MCF 10A (cell line): ENCODE measurements at regions of chr18 and their contacts with region 1.

Region 1: DNA sequence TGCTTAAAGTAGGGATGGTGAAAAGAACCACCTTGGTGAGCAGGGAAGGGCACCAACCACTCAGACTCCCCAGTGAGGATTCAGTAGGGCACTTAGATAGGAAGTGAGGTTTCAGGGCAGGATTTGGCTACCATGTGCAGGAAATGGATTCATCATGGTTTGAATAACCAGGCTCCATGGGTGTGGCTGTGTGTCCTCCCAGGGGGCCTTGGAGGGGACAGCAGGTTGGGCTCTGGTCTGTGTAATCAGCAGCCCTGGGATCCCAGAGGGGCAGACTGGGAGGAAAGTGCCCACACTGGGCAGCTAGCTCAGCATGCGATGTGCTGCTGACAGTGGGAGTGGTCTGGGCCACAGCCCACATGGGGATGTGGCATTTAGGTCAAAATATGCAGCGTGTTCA is 224.6 kb downstream of the CELF4 start:
- DNase-seq: no peak
- H3K4me3 Mint-ChIP-seq: no peak overlapping the region
- H3K27ac Mint-ChIP-seq: no peak overlapping the region
- H3K4me1 Mint-ChIP-seq: peaks cover 7% of the 10 kb centered on the region
- H3K27me3 Mint-ChIP-seq: peaks cover 24% of the 10 kb centered on the region
- CTCF ChIP-seq: no peak

Region 2: GRCh38 chr18:36942264-36942663 is 398.8 kb before region 1 on chr18:
- CTCF ChIA-PET with region 1: interaction called, 12 read pairs
- POLR2A ChIA-PET with region 1: no interaction called
- intact Hi-C with region 1: loop called (anchors 10 kb)
- DNase-seq: peak; percentile 54
- H3K4me3 Mint-ChIP-seq: no peak overlapping the region
- H3K27ac Mint-ChIP-seq: no peak overlapping the region
- H3K4me1 Mint-ChIP-seq: no peaks in the 10 kb centered on the region
- H3K27me3 Mint-ChIP-seq: no peaks in the 10 kb centered on the region
- CTCF ChIP-seq: peak; percentile 83

Region 3: DNA sequence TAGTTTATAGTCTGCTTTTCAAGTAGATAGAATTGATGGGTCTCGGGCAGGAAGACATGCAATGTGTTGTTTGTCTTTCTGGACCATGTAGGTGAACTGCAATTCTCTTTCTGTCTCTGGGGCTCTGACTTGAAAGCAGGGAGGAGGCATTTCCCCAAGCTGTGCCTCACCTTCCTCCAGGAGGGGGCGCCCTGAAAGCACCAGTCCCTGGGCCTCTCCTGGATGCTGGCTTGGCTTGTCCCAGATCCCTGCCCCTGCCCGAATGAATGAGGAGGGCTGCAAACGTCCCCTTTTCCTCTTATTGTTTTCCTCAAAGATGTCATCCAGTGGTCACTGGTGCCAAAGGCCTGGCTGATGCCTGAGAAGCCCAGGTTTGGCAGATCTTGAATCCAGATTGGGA is 46.1 kb before region 1 on chr18:
- CTCF ChIA-PET with region 1: interaction called, 3 read pairs
- POLR2A ChIA-PET with region 1: no interaction called
- intact Hi-C with region 1: loop called (anchors 1 kb)
- DNase-seq: peak; percentile 65
- H3K4me3 Mint-ChIP-seq: no peak overlapping the region
- H3K27ac Mint-ChIP-seq: no peak overlapping the region
- H3K4me1 Mint-ChIP-seq: peaks cover 8% of the 10 kb centered on the region
- H3K27me3 Mint-ChIP-seq: no peaks in the 10 kb centered on the region
- CTCF ChIP-seq: peak; percentile 10

Region 4: GRCh38 chr18:37328946-37329719 is 11.9 kb before region 1 on chr18:
- CTCF ChIA-PET with region 1: interaction called, 28 read pairs
- POLR2A ChIA-PET with region 1: no interaction called
- intact Hi-C with region 1: no loop called
- DNase-seq: no peak
- H3K4me3 Mint-ChIP-seq: no peak overlapping the region
- H3K27ac Mint-ChIP-seq: no peak overlapping the region
- H3K4me1 Mint-ChIP-seq: no peaks in the 10 kb centered on the region
- H3K27me3 Mint-ChIP-seq: no peaks in the 10 kb centered on the region
- CTCF ChIP-seq: no peak

Region 5: DNA sequence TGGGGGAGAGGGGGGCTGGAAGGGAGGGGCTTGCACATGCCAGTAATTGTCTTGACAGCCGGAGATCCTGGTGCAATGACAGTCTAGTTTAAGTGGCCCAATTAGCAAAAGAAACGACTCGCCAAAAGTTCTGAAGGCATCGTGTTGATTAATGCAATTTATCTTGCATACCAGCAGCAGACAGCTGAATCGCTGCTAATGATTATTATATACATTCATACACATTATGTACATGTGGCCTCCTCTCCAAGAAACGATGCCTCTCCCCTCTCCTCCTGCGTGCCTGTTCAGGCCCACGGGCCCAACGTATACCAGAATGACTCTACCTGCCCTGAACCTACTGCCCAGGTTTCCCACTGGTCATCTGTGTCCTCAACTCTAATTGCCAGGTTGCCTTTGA is 10.1 kb after region 1 on chr18:
- CTCF ChIA-PET with region 1: interaction called, 42 read pairs
- POLR2A ChIA-PET with region 1: no interaction called
- intact Hi-C with region 1: no loop called
- DNase-seq: no peak
- H3K4me3 Mint-ChIP-seq: no peak overlapping the region
- H3K27ac Mint-ChIP-seq: no peak overlapping the region
- H3K4me1 Mint-ChIP-seq: no peaks in the 10 kb centered on the region
- H3K27me3 Mint-ChIP-seq: peaks cover 8% of the 10 kb centered on the region
- CTCF ChIP-seq: no peak

Region 6: DNA sequence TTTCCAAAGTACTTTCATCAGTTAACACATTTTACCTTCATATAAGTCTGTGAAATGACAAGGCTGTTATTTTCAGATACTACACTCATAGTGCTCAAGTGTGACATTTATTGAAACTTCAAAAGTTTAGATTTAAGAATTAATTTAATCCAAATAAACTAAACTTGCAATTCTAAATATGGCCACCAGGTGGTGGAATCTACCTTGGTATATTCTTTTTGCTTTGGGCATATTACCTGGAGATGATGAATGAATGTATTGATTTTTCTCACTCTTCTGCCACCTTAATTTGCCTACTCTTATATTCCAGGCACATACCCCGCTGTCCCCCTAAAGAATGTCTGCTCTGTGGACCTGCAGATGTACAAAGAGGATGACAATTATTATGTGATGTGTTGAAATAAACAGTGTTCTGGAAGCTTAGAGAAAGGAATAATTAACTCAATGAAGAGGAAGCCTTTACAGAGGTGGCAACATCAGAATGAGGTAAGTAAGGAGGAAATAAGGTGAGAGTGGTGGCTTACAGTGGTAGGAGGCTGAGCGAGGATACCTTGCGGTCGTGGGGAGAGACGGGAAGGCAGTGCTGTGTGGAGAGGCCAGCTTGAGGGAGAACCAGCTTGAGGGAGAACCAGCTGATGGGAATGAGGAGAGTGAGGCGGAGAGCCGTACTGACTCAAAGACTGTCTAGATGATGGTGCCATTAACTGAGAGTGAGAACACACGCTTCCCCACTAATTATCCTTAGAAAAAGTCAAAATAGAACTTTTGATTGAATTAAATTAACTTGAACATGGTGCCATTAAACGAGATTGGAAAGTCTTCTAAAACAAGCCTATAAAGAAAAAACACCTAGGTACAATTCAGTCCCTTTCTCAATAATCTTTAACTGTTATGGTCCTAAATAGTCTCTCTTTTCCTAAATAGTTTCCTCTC is 45.1 kb after region 1 on chr18:
- CTCF ChIA-PET with region 1: interaction called, 12 read pairs
- POLR2A ChIA-PET with region 1: interaction called, 4 read pairs
- intact Hi-C with region 1: no loop called
- DNase-seq: peak; percentile 54
- H3K4me3 Mint-ChIP-seq: no peak overlapping the region
- H3K27ac Mint-ChIP-seq: no peak overlapping the region
- H3K4me1 Mint-ChIP-seq: no peaks in the 10 kb centered on the region
- H3K27me3 Mint-ChIP-seq: peaks cover 15% of the 10 kb centered on the region
- CTCF ChIP-seq: peak; percentile 53

Region 7: DNA sequence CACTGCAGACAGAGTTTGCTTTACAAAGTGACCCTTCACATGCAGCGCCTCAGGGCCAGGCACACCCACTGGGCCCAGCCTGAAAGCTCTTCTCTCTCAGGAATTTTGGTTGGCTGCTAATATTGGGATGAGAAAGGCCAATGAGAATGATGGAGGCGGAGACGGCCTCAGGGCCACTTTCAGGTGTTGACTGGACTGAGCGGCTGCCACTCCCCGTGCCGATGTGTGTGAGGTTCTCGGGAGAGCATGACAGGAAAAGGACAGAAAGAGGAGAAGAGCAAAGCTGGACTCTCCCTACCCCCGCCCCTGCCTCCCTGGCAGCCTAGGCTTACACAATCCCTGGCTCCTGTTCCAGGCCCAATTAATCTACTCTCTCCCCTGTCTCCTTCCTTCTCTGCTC is 68.9 kb after region 1 on chr18:
- CTCF ChIA-PET with region 1: no interaction called
- POLR2A ChIA-PET with region 1: no interaction called
- intact Hi-C with region 1: no loop called
- DNase-seq: peak; percentile 63
- H3K4me3 Mint-ChIP-seq: no peak overlapping the region
- H3K27ac Mint-ChIP-seq: no peak overlapping the region
- H3K4me1 Mint-ChIP-seq: peaks cover 7% of the 10 kb centered on the region
- H3K27me3 Mint-ChIP-seq: no peaks in the 10 kb centered on the region
- CTCF ChIP-seq: no peak

Region 8: GRCh38 chr18:37537868-37538525 is 197.0 kb after region 1 on chr18:
- CTCF ChIA-PET with region 1: interaction called, 8 read pairs
- POLR2A ChIA-PET with region 1: no interaction called
- intact Hi-C with region 1: loop called (anchors 1 kb)
- DNase-seq: peak; percentile 63
- H3K4me3 Mint-ChIP-seq: no peak overlapping the region
- H3K27ac Mint-ChIP-seq: no peak overlapping the region
- H3K4me1 Mint-ChIP-seq: peaks cover 11% of the 10 kb centered on the region
- H3K27me3 Mint-ChIP-seq: peaks cover 72% of the 10 kb centered on the region
- CTCF ChIP-seq: peak; percentile 92